PC-9 (cell line): ENCODE measurements at regions of chr10 and their contacts with region 1.

Region 1: GRCh38 chr10:17488848-17489247 is 34.5 kb upstream of the ST8SIA6 start:
- DNase-seq: no peak
- H3K4me3 ChIP-seq: no peak overlapping the region
- H3K27ac ChIP-seq: no peak overlapping the region
- H3K4me1 ChIP-seq: no peaks in the 10 kb centered on the region
- H3K27me3 ChIP-seq: no peaks in the 10 kb centered on the region
- CTCF ChIP-seq: no peak

Region 2: DNA sequence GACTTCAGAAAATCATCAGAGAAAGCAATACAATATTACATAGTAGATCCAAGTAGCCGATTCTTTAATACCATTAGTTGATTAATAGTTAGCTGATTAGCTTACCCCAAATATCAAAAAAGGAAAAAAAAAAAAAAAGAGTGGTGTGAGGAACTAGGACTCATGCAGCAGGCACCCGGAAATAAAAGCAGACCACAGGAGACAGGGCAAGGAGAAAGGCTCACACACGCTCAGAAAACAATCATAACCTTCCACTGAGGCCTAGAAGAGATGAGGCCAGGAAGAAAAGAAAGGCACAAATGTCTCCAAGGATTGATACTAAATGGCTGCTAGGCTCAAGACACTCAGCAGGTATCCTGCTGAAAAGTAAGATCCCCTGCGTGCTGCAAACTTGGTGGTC is 313.3 kb before region 1 on chr10:
- CTCF ChIA-PET with region 1: no interaction called
- POLR2A ChIA-PET with region 1: interaction called, 10 read pairs
- intact Hi-C with region 1: no loop called
- DNase-seq: no peak
- H3K4me3 ChIP-seq: no peak overlapping the region
- H3K27ac ChIP-seq: no peak overlapping the region
- H3K4me1 ChIP-seq: no peaks in the 10 kb centered on the region
- H3K27me3 ChIP-seq: no peaks in the 10 kb centered on the region
- CTCF ChIP-seq: no peak

Region 3: GRCh38 chr10:17578603-17579002 is 89.8 kb after region 1 on chr10:
- CTCF ChIA-PET with region 1: no interaction called
- POLR2A ChIA-PET with region 1: no interaction called
- intact Hi-C with region 1: no loop called
- DNase-seq: no peak
- H3K4me3 ChIP-seq: no peak overlapping the region
- H3K27ac ChIP-seq: no peak overlapping the region
- H3K4me1 ChIP-seq: no peaks in the 10 kb centered on the region
- H3K27me3 ChIP-seq: no peaks in the 10 kb centered on the region
- CTCF ChIP-seq: no peak